Posterior cingulate gyrus (tissue), 11 donors: ENCODE measurements at regions of chr17 and their contacts with region 1.

Region 1: DNA sequence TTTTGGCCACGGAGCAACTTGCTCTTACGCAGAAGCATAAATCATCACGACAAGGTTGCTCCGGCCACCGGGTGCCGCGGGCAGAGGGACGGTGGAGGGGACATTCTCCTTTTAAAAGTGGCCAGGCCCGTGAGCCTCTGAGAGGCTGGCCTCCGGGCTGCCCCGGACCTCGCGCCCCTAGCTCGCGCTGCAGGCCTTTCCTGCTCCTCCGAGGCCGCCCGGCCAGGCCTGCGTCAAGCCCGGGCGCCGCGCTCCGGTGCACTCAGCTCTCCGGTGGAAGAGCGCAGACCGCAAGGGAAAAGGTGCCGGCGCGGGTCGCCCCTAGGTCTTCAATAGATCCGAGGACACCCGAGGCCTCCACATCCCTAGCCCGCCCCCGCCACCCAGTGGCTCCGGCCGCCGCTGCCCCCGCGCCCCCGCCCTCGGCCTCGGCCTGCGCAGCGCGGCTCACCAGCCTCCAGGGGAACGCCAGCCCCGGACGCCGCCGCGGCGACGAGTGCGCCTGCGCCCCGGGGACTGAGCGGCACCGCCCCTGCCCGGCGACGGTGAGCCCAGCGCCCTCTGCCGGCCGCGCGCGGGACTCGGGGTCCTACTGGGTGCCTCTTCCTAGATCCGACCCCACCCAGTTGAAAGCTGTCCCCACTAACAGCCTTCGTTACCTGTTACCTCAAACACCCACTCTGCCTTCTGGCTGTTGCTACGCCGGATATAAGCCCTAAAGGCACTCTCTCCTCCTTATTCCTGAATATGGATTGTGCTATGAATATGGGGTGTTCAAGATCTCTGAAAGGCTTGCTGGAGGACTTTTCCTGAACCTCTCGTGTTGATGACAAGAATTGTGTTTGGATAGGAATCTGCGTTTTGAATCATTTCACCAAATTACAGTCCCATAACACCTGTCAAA is at the start of gene LYRM9:
- DNase-seq: peak; percentile 85 to 99 (median 89)

Region 2: GRCh38 chr17:27756512-27757371 is 136.4 kb before region 1 on chr17:
- intact Hi-C with region 1: no loop called
- DNase-seq: peak in 9 of 10 donors; percentile 40 to 92 (median 70)

Region 3: GRCh38 chr17:27996208-27997043 is 103.3 kb after region 1 on chr17:
- intact Hi-C with region 1: loop called (anchors 5 kb)
- DNase-seq: no peak

Region 4: DNA sequence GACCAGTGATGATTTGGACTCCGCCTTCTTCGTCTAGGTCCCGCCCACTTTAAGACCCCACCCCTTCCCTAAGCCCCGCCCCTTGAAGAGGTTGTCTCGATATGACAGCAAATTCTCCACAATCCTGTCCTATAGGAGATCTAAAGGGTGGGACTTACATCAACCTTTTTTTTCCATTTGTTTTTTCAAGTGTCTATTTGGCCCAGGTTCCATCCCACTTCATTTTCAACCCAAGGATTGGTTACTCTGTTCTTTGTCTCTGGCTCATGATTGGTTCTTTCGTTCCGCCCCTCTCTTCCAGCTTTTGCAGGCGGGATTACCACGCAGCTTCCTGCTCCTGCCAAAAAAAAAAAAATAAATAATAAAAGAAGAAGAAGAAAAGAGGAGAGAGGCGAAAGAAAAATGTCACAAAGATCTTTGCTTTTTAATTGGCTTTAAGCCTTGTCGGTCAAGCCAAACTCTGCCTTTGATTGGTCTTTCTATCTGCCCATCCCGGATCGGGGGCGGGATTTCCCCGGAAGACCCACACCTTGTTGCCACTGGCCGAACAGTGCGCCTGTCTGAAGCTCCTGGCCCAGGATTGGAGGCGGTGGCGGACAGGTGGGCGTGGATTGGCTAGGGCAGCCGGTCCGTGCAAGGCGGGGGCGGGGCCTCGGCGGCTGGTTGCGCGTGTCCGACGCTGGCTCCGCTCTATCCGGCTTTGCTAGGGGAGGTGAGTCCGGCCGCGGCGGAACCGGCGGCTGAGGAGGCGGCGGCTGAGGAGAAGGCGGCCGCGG is 148.1 kb after region 1 on chr17:
- intact Hi-C with region 1: loop called (anchors 5 kb)
- DNase-seq: peak; percentile 99 to 100 (median 100)

Region 5: DNA sequence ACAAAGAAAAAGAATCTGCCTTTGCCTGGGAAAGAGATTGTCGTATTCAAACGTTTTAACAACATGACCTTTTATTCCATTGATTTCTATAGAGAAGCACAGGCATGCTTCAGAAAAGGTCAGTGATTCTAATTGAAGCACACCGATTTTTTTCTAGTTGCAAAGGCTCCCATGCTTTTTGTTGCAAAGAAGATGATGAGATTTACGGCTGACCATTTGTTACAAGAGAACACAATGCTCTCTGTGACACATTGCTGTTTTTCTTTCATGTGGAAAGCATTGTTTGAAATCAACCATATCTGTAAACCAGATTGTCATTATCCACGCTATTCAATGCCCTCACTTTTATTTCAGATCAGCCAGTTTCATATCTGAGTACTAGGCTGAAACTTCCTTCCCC is 249.2 kb after region 1 on chr17:
- intact Hi-C with region 1: loop called (anchors 5 kb)
- DNase-seq: no peak

Region 6: DNA sequence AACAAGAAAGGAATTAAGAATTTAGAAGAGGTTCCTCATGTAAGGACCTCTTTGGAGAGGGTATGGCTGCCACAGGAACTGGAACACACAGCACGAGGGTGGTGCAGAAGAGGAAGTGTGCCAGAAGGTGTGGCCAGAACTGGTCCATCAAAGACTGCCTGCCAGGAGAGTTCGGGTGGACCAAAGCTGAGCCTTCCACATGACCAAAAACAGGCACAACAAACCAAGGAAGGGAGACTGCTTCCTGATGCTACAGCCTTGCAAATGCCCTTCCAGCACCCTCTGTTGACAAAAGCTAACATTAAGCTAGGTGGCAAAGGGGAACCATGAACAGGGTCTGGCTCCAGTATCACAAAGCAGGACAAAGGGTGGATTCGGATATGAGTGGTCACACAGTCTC is 300.1 kb after region 1 on chr17:
- intact Hi-C with region 1: loop called (anchors 5 kb)
- DNase-seq: peak in 4 of 10 donors; percentile 15 to 88 (median 24)

Region 7: DNA sequence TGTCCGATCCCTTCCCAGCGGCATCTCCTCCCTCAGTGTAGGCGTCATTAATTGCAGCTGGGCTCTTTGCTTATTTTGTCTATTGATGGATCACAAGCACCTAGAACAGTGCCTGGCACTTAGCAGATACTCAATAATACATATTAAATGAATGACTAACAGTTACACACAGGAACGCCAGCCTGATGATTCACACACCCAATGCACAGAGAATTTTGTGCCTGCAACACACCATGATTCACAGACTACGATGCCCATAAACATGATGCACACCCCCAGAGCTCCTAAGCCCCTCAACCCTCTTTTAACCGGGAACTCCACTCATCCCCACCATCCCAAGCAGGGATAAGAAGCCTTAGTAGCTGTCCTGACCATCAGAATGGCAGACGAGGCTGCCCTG is 359.3 kb after region 1 on chr17:
- intact Hi-C with region 1: loop called (anchors 5 kb)
- DNase-seq: no peak